RWPE1 (cell line): ENCODE measurements at regions of chr17 and their contacts with region 1.

Region 1: DNA sequence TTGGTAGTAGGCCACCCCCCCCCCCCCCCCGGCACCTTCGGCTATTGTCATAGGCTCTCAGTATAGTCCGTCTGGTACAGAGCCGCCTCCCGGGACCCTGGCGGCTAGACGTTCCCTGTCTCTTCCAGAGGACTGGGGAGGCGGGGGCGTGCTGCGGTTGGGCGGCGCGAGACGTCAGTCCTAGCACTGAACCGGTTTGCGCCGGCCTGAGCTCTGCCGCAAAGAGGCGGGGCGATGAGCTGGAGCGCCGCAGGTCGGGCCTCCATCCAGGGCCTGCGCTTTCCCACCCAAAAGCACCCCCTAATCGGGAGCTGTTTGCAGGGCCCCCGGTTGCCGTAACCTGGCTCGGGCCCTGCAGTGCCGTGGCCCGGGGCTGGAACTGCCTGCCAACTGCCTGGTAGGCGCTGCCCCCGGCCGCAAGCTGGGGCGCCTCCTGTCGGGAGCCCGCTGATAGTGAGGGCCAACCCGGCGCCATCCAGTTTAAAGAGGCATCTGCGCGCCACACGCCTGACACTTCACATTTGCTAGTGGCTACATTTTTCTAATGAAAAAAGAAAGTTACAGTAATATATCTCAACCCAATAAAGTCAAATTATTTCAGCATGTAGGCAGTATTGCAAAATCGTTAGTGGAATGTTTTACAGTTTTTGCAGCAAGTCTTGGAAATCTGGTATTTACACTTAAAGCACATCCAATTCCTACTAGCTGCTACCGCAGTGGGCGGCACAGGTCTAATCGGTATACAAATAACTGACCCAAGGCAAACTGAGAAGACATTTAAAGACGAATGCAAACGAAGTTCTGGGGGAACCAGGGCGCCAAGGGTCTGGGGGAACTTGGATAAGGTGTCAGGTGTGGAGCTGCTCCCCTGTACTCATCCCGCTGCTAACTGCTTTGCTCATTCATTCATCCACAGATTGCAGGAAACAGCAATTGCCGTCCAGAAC is 748 bp upstream of the USP22 start:
- DNase-seq: peak; percentile 35
- H3K27ac ChIP-seq: peak overlapping the region; percentile 97
- CTCF ChIP-seq: peak; percentile 89

Region 2: GRCh38 chr17:21007646-21008045 is 35.9 kb before region 1 on chr17:
- CTCF ChIA-PET with region 1: no interaction called
- POLR2A ChIA-PET with region 1: no interaction called
- DNase-seq: no peak
- H3K27ac ChIP-seq: no peak overlapping the region
- CTCF ChIP-seq: no peak

Region 3: GRCh38 chr17:21098934-21099689 is 55.6 kb after region 1 on chr17:
- CTCF ChIA-PET with region 1: interaction called, 5 read pairs
- POLR2A ChIA-PET with region 1: interaction called, 10 read pairs
- DNase-seq: peak; percentile 96
- H3K27ac ChIP-seq: peak overlapping the region; percentile 70
- CTCF ChIP-seq: no peak